OCI-LY7 (cell line): ENCODE measurements at regions of chr7 and their contacts with region 1.

Region 1: GRCh38 chr7:92691578-92691977 is 101.4 kb upstream of the FAM133B start:
- DNase-seq: peak; percentile 75
- H3K4me3 ChIP-seq: no peak overlapping the region
- H3K27ac ChIP-seq: no peak overlapping the region
- H3K4me1 ChIP-seq: peaks cover 4% of the 10 kb centered on the region
- CTCF ChIP-seq: peak; percentile 90

Region 2: DNA sequence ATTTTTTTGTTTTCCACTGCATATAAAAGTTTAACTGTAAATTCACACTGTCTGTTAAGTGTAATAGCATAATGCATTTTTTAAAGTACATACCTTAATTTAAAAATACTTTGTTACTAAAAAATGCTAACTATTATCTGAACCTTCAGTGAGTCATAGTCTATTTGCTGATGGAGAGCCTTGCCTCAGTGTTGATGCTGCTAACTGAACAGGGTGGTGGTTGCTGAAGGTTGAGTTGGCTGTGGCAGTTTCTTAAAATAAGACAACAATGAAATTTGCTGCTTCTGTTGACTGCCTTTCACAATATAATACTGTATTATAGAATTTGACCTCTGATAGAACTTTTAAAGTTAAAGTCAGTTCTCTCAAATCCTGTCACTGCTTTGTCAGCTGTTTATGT is 316.6 kb before region 1 on chr7:
- CTCF ChIA-PET with region 1: no interaction called
- POLR2A ChIA-PET with region 1: no interaction called
- intact Hi-C with region 1: no loop called
- DNase-seq: no peak
- H3K4me3 ChIP-seq: no peak overlapping the region
- H3K27ac ChIP-seq: no peak overlapping the region
- H3K4me1 ChIP-seq: no peaks in the 10 kb centered on the region
- CTCF ChIP-seq: no peak

Region 3: DNA sequence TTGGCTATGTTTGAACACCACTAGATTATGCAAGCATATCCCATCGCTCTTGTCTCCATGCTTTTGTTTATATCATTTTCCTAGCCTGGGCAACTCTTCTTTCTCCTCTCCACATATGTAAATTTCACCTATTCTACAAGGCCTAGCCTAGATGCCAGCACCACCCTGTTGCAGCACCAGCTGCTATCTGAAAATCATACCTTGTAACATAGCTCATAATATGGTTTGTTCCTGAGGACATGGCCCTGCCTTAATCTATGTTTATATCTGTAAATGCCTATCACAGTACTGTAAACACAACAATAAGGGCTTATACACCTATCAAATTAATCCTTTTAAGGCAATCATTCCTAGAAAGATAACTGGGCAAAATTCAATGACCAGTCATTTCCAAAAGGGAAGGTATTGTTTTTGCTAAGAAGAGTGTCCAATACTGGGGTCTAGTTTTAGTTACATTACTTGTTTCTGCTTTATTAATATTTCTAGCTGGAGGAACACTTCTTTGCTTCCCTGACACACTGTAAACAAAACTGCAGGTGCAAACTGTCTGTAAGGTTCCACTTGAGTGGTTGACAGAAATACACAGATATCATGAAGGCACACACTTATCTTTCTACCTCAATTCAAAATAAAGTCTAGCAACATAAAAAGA is 17.3 kb before region 1 on chr7:
- CTCF ChIA-PET with region 1: no interaction called
- POLR2A ChIA-PET with region 1: interaction called, 12 read pairs
- intact Hi-C with region 1: no loop called
- DNase-seq: peak; percentile 78
- H3K4me3 ChIP-seq: peak overlapping the region; percentile 34
- H3K27ac ChIP-seq: peak overlapping the region; percentile 82
- H3K4me1 ChIP-seq: peaks cover 23% of the 10 kb centered on the region
- CTCF ChIP-seq: no peak

Region 4: GRCh38 chr7:92731335-92732063 is 39.9 kb after region 1 on chr7:
- CTCF ChIA-PET with region 1: no interaction called
- POLR2A ChIA-PET with region 1: no interaction called
- intact Hi-C with region 1: no loop called
- DNase-seq: peak; percentile 38
- H3K4me3 ChIP-seq: no peak overlapping the region
- H3K27ac ChIP-seq: no peak overlapping the region
- H3K4me1 ChIP-seq: peaks cover 16% of the 10 kb centered on the region
- CTCF ChIP-seq: no peak

Region 5: DNA sequence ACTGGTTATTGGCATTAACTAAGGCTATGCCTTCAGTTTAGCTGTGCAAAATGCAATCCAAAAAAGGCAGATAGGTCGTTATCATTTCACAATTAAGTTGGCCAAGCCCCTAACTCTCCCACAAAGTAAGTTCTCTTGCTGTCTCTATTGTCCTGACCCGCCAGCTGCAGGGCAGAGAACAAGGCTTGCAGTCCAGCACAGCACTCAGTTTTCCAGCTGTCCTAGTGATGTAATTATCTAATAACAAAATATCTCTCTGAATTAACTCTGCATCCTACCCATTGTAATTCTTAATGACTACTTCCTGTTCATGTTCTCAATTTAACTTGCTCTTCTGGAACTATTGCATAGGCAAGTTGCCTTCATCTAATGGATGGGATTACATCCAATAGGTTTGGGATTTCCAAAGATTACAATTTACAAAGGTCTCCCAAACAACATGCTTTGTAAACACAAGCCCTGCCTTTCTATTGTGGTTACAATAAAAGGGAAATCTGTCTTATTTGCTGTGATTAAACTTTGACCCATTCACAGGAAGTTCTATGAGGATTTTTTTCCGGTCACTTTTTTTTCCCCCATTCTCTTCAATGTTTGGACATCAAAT is 89.6 kb after region 1 on chr7:
- CTCF ChIA-PET with region 1: no interaction called
- POLR2A ChIA-PET with region 1: no interaction called
- intact Hi-C with region 1: loop called (anchors 10 kb)
- DNase-seq: no peak
- H3K4me3 ChIP-seq: no peak overlapping the region
- H3K27ac ChIP-seq: no peak overlapping the region
- H3K4me1 ChIP-seq: peaks cover 35% of the 10 kb centered on the region
- CTCF ChIP-seq: no peak

Region 6: DNA sequence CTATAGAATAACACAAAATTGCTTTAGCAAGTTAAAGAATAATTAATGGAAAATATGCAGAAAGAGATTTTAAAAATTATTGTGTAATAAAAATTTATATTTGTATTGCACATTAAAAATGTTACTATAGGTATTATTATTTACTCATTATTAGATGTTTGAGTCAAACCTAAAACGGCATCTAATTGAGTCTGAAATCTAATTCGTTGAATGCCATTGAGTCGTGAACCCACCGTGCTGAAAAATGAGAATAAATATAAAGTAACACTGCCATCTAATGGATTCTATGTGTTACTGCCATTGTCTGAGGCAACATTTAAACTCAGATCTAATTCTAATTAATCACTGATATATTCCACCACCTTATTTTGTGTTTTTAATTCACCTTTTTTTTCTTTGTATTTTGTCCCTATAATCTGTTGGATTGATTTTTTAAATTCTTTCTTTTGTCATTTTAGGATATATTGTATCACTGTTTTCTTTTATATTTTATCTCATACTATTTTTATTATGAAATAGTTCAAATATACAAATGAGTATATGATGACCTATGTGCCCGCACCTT is 364.0 kb after region 1 on chr7:
- CTCF ChIA-PET with region 1: no interaction called
- POLR2A ChIA-PET with region 1: no interaction called
- intact Hi-C with region 1: loop called (anchors 2 kb)
- DNase-seq: peak; percentile 54
- H3K4me3 ChIP-seq: no peak overlapping the region
- H3K27ac ChIP-seq: no peak overlapping the region
- H3K4me1 ChIP-seq: no peaks in the 10 kb centered on the region
- CTCF ChIP-seq: peak; percentile 92